ENCODE measurements at regions of chr2 and their contacts with region 1.

Region 1: DNA sequence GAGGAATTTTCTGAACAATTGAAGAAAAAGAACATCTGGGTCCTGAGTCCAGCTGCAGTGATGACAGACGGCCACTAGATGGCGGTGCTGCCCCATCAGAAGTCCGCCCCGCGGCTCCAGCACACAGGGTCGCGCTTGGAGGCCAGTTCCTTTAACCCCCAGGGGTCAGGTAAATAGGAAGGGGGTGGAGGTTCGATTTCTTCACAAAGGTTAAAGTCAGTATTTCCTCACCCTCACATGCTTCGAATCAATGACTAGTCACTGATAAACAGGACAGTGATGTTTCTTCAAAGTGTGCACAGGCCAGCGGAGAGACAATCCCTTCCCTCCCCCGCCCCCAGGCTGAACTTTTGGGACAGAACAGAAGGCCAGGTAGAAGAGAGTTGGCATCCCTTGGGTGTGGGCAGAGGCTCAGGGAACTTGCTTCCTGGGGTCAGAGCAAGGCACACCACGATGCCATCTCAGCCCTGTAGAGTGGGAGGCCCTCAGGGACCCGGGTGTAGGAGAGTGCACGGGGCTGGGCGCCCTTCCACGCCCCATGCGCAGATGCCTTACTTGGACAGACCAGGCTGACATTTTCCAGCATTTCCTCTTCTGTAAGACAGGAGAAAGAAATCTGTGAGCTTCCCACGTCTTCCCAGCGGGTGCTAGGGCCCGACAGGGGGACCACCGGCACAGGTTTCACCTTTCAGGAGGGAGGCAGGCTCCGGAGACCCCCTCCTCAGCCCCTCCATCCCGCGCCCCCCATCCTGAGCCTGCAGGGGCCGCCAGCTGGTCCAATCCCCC is 722 bp downstream of the APOB start:
- DNase-seq: peak; percentile 64
- ATAC-seq: peak; percentile 62 to 63

Region 2: GRCh38 chr2:21118302-21118920 is 75.3 kb after region 1 on chr2:
- intact Hi-C with region 1: loop called (anchors 1 to 5 kb)
- DNase-seq: no peak
- ATAC-seq: peak; percentile 49 to 55

Region 3: DNA sequence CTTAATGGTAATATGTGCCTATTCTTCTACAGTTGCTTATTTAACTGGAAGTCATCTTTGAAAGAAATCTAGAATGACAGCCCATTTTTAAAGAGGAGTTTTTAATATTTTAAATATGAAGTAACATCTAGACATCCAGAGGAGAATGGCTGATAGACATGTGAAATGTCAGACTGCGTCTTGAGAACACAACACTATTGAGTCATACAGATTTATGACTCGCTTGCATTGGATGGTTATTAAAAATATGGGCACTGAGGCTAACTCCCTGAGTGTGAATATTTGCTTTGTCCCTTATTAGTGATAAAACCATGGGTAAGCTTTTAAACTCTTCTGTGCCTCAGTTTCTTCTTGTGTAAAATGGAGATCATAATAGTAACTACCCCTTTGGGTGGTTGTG is 103.5 kb after region 1 on chr2:
- intact Hi-C with region 1: no loop called
- DNase-seq: no peak
- ATAC-seq: no peak

Region 4: GRCh38 chr2:21317131-21317530 is 274.0 kb after region 1 on chr2:
- intact Hi-C with region 1: loop called (anchors 2 to 10 kb)
- DNase-seq: peak; percentile 59
- ATAC-seq: peak; percentile 66 to 73